AG04450 (cell line): ENCODE measurements at regions of chr17 and their contacts with region 1.

Region 1: GRCh38 chr17:39687811-39688518 is at the start of gene PGAP3:
- DNase-seq: peak; percentile 66
- H3K4me3 ChIP-seq: peak within 1 kb of the TSS; percentile 83
- H3K27ac ChIP-seq: peak within 1 kb of the TSS; percentile 85
- H3K27me3 ChIP-seq: no peaks in the 10 kb centered on the region
- CTCF ChIP-seq: no peak
- polyA plus RNA-seq, gene PGAP3: 9.6 and 13.9 TPM in 2 replicates

Region 2: DNA sequence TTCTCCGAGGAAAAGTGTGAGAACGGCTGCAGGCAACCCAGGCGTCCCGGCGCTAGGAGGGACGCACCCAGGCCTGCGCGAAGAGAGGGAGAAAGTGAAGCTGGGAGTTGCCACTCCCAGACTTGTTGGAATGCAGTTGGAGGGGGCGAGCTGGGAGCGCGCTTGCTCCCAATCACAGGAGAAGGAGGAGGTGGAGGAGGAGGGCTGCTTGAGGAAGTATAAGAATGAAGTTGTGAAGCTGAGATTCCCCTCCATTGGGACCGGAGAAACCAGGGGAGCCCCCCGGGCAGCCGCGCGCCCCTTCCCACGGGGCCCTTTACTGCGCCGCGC is 11.8 kb after region 1 on chr17 and contains the start of gene ERBB2:
- CTCF ChIA-PET with region 1: interaction called, 3 read pairs
- POLR2A ChIA-PET with region 1: interaction called, 18 read pairs
- DNase-seq: peak; percentile 41
- H3K4me3 ChIP-seq: peak within 1 kb of the TSS; percentile 77
- H3K27ac ChIP-seq: no peak within 1 kb of the TSS
- H3K27me3 ChIP-seq: no peaks in the 10 kb centered on the region
- CTCF ChIP-seq: no peak
- polyA plus RNA-seq, gene ERBB2: 21.2 and 27.9 TPM in 2 replicates